MCF 10A (cell line): ENCODE measurements at regions of chr5 and their contacts with region 1.

Region 1: GRCh38 chr5:16791036-16791705 is 144.9 kb downstream of the MYO10 start:
- DNase-seq: peak; percentile 63
- H3K4me3 Mint-ChIP-seq: no peak overlapping the region
- H3K27ac Mint-ChIP-seq: no peak overlapping the region
- H3K4me1 Mint-ChIP-seq: peaks cover 31% of the 10 kb centered on the region
- H3K27me3 Mint-ChIP-seq: no peaks in the 10 kb centered on the region
- CTCF ChIP-seq: peak; percentile 52

Region 2: GRCh38 chr5:16805486-16805885 is 14.3 kb after region 1 on chr5:
- CTCF ChIA-PET with region 1: interaction called, 12 read pairs
- POLR2A ChIA-PET with region 1: interaction called, 3 read pairs
- intact Hi-C with region 1: no loop called
- DNase-seq: no peak
- H3K4me3 Mint-ChIP-seq: no peak overlapping the region
- H3K27ac Mint-ChIP-seq: no peak overlapping the region
- H3K4me1 Mint-ChIP-seq: peaks cover 10% of the 10 kb centered on the region
- H3K27me3 Mint-ChIP-seq: no peaks in the 10 kb centered on the region
- CTCF ChIP-seq: no peak

Region 3: DNA sequence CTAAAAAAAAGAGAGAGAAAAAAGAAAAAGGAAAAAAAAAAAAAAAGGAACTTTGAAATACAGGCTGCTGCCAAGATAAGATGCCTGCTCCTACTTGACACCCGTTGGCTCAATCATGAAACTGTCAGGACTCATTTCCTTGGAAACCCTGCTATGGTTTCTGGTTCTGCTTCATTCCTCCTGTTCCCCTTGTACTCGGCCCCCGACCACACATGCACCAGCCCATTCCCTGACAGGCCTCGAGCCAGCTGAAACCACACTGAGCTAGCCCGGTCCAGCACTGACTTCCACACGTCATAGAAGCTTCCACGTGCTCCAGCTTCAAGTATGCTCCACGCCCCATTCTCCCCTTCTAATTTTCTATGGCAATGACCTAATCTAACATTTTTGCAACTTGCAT is 51.7 kb after region 1 on chr5:
- CTCF ChIA-PET with region 1: interaction called, 4 read pairs
- POLR2A ChIA-PET with region 1: interaction called, 3 read pairs
- intact Hi-C with region 1: loop called (anchors 2 kb)
- DNase-seq: no peak
- H3K4me3 Mint-ChIP-seq: no peak overlapping the region
- H3K27ac Mint-ChIP-seq: no peak overlapping the region
- H3K4me1 Mint-ChIP-seq: no peaks in the 10 kb centered on the region
- H3K27me3 Mint-ChIP-seq: no peaks in the 10 kb centered on the region
- CTCF ChIP-seq: no peak

Region 4: GRCh38 chr5:16934123-16934522 is 143.0 kb after region 1 on chr5:
- CTCF ChIA-PET with region 1: interaction called, 15 read pairs
- POLR2A ChIA-PET with region 1: interaction called, 4 read pairs
- intact Hi-C with region 1: loop called (anchors 1 kb)
- DNase-seq: peak; percentile 80
- H3K4me3 Mint-ChIP-seq: peak overlapping the region; percentile 82
- H3K27ac Mint-ChIP-seq: no peak overlapping the region
- H3K4me1 Mint-ChIP-seq: peaks cover 34% of the 10 kb centered on the region
- H3K27me3 Mint-ChIP-seq: peaks cover 15% of the 10 kb centered on the region
- CTCF ChIP-seq: peak; percentile 90